CD8-positive, alpha-beta T cell (primary cell): ENCODE measurements at regions of chr6 and their contacts with region 1.

Region 1: DNA sequence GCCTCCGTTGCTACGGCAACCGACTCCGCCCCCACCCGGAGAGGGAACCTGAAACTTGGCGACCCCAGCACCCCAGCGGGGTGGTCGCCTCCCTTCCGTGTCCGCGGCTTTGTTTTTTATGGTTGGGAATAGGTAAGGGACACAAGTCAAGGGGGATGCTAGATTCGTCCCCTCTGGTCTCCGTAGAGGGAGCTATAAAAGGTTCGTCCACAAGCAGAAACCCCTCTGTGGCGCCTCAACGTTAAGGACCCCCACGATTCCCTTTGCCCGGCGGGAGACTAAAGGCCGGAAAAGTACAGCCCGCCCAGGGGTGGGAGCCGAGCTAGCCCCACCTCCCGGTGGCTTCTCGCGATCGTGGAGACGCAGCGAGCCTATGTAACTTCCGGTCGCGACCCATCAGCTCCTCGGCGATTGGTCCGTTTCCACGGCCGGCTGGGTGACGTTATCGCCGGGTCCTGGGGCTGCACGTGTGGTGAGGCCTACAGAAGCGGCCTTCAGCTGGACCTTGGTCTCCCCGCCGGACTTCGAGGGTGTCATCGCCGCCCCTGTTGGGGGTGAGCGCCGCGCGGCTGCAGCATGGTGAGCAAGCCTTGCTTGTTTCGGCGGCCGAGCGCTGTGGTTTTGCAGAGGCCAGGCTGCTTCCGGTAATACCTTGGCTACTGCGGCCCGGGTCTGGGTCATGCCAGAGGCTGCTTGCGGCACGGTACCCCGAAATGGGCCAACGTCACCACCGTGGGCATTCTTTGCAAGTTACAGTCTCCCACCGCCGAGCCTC is at the start of gene LTV1:
- DNase-seq: peak; percentile 82 to 96 (median 91)
- ATAC-seq: peak; percentile 96
- H3K4me3 ChIP-seq: peak within 1 kb of the TSS; percentile 96 to 99
- H3K4me3 Mint-ChIP-seq: peak within 1 kb of the TSS; percentile 96
- H3K27ac ChIP-seq: peak within 1 kb of the TSS; percentile 94 to 95
- H3K27ac Mint-ChIP-seq: peak within 1 kb of the TSS; percentile 98
- H3K4me1 ChIP-seq: peaks cover 6% of the 10 kb centered on the region
- H3K4me1 Mint-ChIP-seq: peaks cover 28% of the 10 kb centered on the region
- H3K27me3 ChIP-seq: no peaks in the 10 kb centered on the region
- H3K27me3 Mint-ChIP-seq: no peaks in the 10 kb centered on the region
- CTCF ChIP-seq: no peak
- total RNA-seq, gene LTV1: 31.7 to 33.4 TPM

Region 2: GRCh38 chr6:142946181-142946923 is 896.7 kb before region 1 on chr6:
- CTCF ChIA-PET with region 1: no interaction called
- POLR2A ChIA-PET with region 1: no interaction called
- intact Hi-C with region 1: loop called (anchors 10 kb)
- DNase-seq: peak; percentile 79 to 98 (median 90)
- ATAC-seq: peak; percentile 41
- H3K4me3 ChIP-seq: peak overlapping the region; percentile 73 to 95
- H3K4me3 Mint-ChIP-seq: peak overlapping the region; percentile 99
- H3K27ac ChIP-seq: peak overlapping the region; percentile 96 to 97
- H3K27ac Mint-ChIP-seq: peak overlapping the region; percentile 96
- H3K4me1 ChIP-seq: peaks cover 27% of the 10 kb centered on the region
- H3K4me1 Mint-ChIP-seq: peaks cover 36% of the 10 kb centered on the region
- H3K27me3 ChIP-seq: no peaks in the 10 kb centered on the region
- H3K27me3 Mint-ChIP-seq: no peaks in the 10 kb centered on the region
- CTCF ChIP-seq: no peak

Region 3: DNA sequence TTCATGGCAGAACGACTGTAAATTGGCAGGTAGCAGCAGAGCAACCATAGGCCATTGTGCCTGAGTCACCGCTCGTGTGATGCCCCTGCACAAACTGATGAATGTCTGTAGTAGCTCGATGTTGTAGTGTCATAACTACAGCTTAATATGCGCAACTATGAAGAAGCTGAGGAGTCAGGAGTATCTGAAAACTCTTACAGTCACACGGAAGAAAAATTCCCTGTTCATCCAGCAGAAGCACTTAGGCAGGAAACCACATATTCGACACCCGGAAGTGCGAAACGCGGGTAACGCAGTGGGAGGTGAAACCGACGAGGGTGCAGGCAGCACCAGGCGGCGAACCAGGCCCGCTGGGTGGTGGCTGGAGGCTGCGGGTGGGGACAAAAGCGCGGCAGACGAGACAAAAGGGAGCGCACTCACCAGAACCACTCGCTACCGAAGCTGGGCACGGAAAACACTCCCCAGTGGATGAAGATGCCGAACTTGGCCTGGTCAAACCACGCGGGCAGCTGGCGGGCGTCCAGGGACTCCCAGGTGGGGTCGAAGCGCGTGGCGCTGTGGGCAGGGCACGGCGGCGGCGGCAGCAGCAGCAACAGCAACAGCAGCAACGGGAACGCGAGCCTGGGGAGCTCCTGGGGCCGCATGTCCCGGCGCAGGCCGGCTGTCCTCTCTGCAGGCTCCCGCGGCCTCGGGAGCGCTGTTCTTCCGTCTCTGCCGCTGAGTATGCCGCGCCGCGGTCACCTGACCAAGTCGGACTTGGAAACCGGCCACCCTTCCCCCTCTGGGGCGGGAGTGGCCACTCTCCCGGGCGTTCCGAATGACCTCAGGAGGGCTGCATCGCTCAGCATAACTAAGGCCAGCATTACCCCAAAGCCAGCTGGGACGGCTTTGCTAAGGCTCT is 331.8 kb before region 1 on chr6 and contains the start of gene FUCA2:
- CTCF ChIA-PET with region 1: interaction called, 5 read pairs
- POLR2A ChIA-PET with region 1: no interaction called
- intact Hi-C with region 1: loop called in 1 of 2 experiments (anchors 2 kb)
- DNase-seq: peak; percentile 28 to 83 (median 64)
- ATAC-seq: peak; percentile 70
- H3K4me3 ChIP-seq: peak within 1 kb of the TSS; percentile 61 to 71
- H3K4me3 Mint-ChIP-seq: peak within 1 kb of the TSS; percentile 90
- H3K27ac ChIP-seq: peak within 1 kb of the TSS; percentile 26 to 70
- H3K27ac Mint-ChIP-seq: peak within 1 kb of the TSS; percentile 82
- H3K4me1 ChIP-seq: peaks cover 10% of the 10 kb centered on the region
- H3K4me1 Mint-ChIP-seq: peaks cover 25% of the 10 kb centered on the region
- H3K27me3 ChIP-seq: no peaks in the 10 kb centered on the region
- H3K27me3 Mint-ChIP-seq: no peaks in the 10 kb centered on the region
- CTCF ChIP-seq: no peak
- total RNA-seq, gene FUCA2: 1.6 to 2.2 TPM

Region 4: DNA sequence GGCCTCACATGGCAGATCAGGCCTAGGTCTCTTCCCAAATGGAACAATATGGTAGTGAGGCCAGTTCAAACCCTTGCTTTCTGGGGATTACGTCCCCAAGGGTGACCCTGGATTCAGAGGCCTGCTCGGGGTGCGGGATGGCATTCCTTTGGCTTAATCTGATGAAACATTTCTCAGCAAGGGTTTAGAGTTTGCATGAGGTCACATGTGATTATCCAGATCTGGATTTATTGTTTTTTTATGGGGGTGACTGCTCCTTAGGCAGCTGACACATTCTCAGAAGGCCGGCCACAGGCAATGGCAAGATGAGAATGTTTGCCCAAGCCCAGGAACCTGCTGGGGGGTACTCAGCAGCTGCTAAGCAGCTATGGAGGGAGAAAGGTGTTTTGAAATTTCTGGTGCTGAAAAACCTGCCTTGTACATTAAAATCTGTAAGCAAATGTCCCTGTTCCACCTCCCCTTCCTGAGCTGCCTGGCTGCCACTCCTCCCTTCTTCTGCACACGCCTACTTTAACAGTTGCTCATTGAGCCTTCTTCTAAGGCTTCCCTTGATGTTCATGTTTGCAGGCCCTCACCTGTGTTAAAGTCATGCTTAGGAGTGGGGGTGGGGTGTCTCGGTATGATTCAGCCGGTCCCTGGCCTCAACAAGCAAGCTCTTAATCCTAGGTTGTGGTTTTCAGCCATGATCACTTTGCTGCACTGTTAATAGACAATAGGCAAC is 293.7 kb before region 1 on chr6:
- CTCF ChIA-PET with region 1: no interaction called
- POLR2A ChIA-PET with region 1: no interaction called
- intact Hi-C with region 1: loop called in 1 of 2 experiments (anchors 5 kb)
- DNase-seq: peak in 2 of 9 experiments; percentile 20 to 32
- ATAC-seq: peak; percentile 34
- H3K4me3 ChIP-seq: no peak overlapping the region
- H3K4me3 Mint-ChIP-seq: no peak overlapping the region
- H3K27ac ChIP-seq: no peak overlapping the region
- H3K27ac Mint-ChIP-seq: peak overlapping the region; percentile 9
- H3K4me1 ChIP-seq: peaks cover 10% of the 10 kb centered on the region
- H3K4me1 Mint-ChIP-seq: peaks cover 64% of the 10 kb centered on the region
- H3K27me3 ChIP-seq: no peaks in the 10 kb centered on the region
- H3K27me3 Mint-ChIP-seq: no peaks in the 10 kb centered on the region
- CTCF ChIP-seq: no peak

Region 5: DNA sequence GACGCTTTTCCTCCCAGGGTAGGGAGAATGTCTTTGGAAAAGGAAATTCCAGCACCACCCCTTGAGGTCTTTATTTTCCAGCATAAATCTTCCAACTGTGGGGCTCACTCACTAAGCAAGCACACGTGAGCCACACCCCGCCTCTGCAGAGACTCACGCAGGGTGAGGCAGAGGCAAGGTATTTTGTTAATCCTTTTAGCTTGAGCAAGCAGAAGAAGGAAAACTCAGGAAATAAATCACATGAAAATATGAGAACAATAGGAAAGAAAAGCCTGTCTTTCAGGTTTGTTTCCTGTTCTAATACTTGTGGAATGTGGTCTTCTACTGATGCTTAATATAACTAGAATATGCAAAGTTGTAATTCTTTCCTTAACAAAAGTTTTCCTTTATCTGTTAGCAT is 169.4 kb before region 1 on chr6:
- CTCF ChIA-PET with region 1: no interaction called
- POLR2A ChIA-PET with region 1: no interaction called
- intact Hi-C with region 1: no loop called
- DNase-seq: no peak
- ATAC-seq: no peak
- H3K4me3 ChIP-seq: no peak overlapping the region
- H3K4me3 Mint-ChIP-seq: no peak overlapping the region
- H3K27ac ChIP-seq: no peak overlapping the region
- H3K27ac Mint-ChIP-seq: no peak overlapping the region
- H3K4me1 ChIP-seq: no peaks in the 10 kb centered on the region
- H3K4me1 Mint-ChIP-seq: peaks cover 10% of the 10 kb centered on the region
- H3K27me3 ChIP-seq: peaks cover 0 to 3% of the 10 kb centered on the region in 2 experiments
- H3K27me3 Mint-ChIP-seq: peaks cover 7% of the 10 kb centered on the region
- CTCF ChIP-seq: no peak

Region 6: GRCh38 chr6:143821359-143821758 is 21.7 kb before region 1 on chr6:
- CTCF ChIA-PET with region 1: no interaction called
- POLR2A ChIA-PET with region 1: no interaction called
- intact Hi-C with region 1: no loop called
- DNase-seq: no peak
- ATAC-seq: no peak
- H3K4me3 ChIP-seq: no peak overlapping the region
- H3K4me3 Mint-ChIP-seq: no peak overlapping the region
- H3K27ac ChIP-seq: no peak overlapping the region
- H3K27ac Mint-ChIP-seq: no peak overlapping the region
- H3K4me1 ChIP-seq: no peaks in the 10 kb centered on the region
- H3K4me1 Mint-ChIP-seq: no peaks in the 10 kb centered on the region
- H3K27me3 ChIP-seq: no peaks in the 10 kb centered on the region
- H3K27me3 Mint-ChIP-seq: no peaks in the 10 kb centered on the region
- CTCF ChIP-seq: no peak

Region 7: DNA sequence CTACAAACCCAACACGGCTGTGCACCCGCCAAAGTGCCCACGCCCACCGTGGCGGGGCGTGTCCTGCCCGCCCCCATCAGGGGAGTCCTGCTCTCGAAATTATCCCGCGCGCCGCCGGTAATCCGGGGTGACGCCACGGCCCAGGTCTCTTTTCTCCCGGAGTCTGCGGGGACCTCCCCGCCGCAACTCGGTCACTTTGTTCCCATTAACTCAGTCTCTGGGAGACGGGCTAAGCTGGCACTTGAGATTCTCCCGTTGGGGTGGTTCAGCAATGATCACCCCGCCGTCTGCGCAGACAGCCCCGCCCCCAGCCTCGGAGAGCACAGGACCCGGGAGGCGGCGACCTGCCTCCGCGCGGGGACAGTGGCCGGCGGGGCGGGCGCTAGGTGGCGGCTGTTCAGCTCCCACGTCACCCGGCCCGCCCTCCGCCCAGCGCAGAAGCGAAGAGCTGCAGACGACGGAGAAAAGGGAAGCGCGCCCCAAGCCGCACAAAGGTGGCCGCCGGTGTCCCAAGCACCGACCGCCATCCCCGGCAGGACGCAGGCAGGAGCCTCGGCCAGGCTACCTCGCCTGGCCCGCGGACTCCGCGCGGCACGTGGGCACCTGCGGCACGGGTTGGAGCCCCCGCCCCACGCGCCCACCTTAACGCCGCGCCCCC is 220.8 kb after region 1 on chr6:
- CTCF ChIA-PET with region 1: no interaction called
- POLR2A ChIA-PET with region 1: interaction called, 6 read pairs
- intact Hi-C with region 1: loop called (anchors 2 kb)
- DNase-seq: peak; percentile 85 to 96 (median 91)
- ATAC-seq: peak; percentile 90
- H3K4me3 ChIP-seq: peak overlapping the region; percentile 93 to 97
- H3K4me3 Mint-ChIP-seq: peak overlapping the region; percentile 91
- H3K27ac ChIP-seq: peak overlapping the region; percentile 86 to 88
- H3K27ac Mint-ChIP-seq: peak overlapping the region; percentile 95
- H3K4me1 ChIP-seq: peaks cover 16% of the 10 kb centered on the region
- H3K4me1 Mint-ChIP-seq: peaks cover 30% of the 10 kb centered on the region
- H3K27me3 ChIP-seq: no peaks in the 10 kb centered on the region
- H3K27me3 Mint-ChIP-seq: no peaks in the 10 kb centered on the region
- CTCF ChIP-seq: no peak

Region 8: GRCh38 chr6:145734486-145735355 is 1891.6 kb after region 1 on chr6:
- CTCF ChIA-PET with region 1: no interaction called
- POLR2A ChIA-PET with region 1: no interaction called
- intact Hi-C with region 1: loop called in 1 of 2 experiments (anchors 10 kb)
- DNase-seq: peak; percentile 26 to 80 (median 65)
- ATAC-seq: peak; percentile 54
- H3K4me3 ChIP-seq: peak overlapping the region; percentile 52 to 67
- H3K4me3 Mint-ChIP-seq: peak overlapping the region; percentile 96
- H3K27ac ChIP-seq: peak overlapping the region; percentile 52 to 72
- H3K27ac Mint-ChIP-seq: peak overlapping the region; percentile 98
- H3K4me1 ChIP-seq: peaks cover 19% of the 10 kb centered on the region
- H3K4me1 Mint-ChIP-seq: peaks cover 34% of the 10 kb centered on the region
- H3K27me3 ChIP-seq: no peaks in the 10 kb centered on the region
- H3K27me3 Mint-ChIP-seq: no peaks in the 10 kb centered on the region
- CTCF ChIP-seq: no peak